H1 (cell line): ENCODE measurements at regions of chr22 and their contacts with region 1.

Region 1: GRCh38 chr22:40436505-40437451 is 66.4 kb downstream of the SGSM3 start:
- DNase-seq: no peak
- H3K4me3 ChIP-seq: no peak overlapping the region
- H3K27ac ChIP-seq: no peak overlapping the region
- H3K4me1 ChIP-seq: no peaks in the 10 kb centered on the region; a peak in 1 of 7 replicates
- H3K27me3 ChIP-seq: no peaks in the 10 kb centered on the region
- CTCF ChIP-seq: peak in 2 of 3 experiments; percentile 41 to 44; a peak in 2 of 4 replicates
- EP300 ChIP-seq: no peak
- POLR2A ChIP-seq: no peak
- RAD21 ChIP-seq: peak; percentile 67 to 69

Region 2: GRCh38 chr22:40310081-40310767 is 126.6 kb before region 1 on chr22:
- CTCF ChIA-PET with region 1: no interaction called
- POLR2A ChIA-PET with region 1: no interaction called
- DNase-seq: no peak
- H3K4me3 ChIP-seq: no peak overlapping the region
- H3K27ac ChIP-seq: no peak overlapping the region
- H3K4me1 ChIP-seq: no peaks in the 10 kb centered on the region
- H3K27me3 ChIP-seq: no peaks in the 10 kb centered on the region
- CTCF ChIP-seq: no peak
- EP300 ChIP-seq: no peak
- POLR2A ChIP-seq: no peak
- RAD21 ChIP-seq: no peak

Region 3: DNA sequence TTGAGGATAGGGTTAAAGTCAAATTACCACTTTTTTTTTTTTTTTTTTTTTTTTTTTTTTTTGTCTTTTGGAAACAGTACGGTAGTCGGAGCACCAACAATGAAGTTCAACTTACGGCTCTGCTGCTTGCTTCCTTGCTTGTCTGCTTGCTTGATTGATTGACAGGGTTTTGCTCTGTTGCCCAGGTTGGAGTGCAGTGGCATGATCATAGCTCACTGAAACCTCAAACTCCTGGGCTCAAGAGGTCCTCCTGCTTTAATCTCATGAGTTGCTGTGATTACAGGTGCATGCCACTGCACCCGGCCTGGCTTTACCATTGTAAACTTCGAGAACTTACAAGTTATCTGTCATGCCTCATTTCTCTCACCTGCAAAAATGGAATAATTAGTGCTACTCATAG is 60.6 kb before region 1 on chr22:
- CTCF ChIA-PET with region 1: no interaction called
- POLR2A ChIA-PET with region 1: no interaction called
- DNase-seq: no peak
- H3K4me3 ChIP-seq: no peak overlapping the region
- H3K27ac ChIP-seq: no peak overlapping the region
- H3K4me1 ChIP-seq: peaks cover 0 to 1% (median 0%) of the 10 kb centered on the region in 4 experiments; a peak in 1 of 7 replicates
- H3K27me3 ChIP-seq: no peaks in the 10 kb centered on the region
- CTCF ChIP-seq: no peak
- EP300 ChIP-seq: no peak
- POLR2A ChIP-seq: no peak
- RAD21 ChIP-seq: no peak

Region 4: GRCh38 chr22:40426594-40427333 is 10.0 kb before region 1 on chr22:
- CTCF ChIA-PET with region 1: interaction called, 57 read pairs
- POLR2A ChIA-PET with region 1: interaction called, 6 read pairs
- DNase-seq: no peak
- H3K4me3 ChIP-seq: no peak overlapping the region
- H3K27ac ChIP-seq: no peak overlapping the region
- H3K4me1 ChIP-seq: no peaks in the 10 kb centered on the region
- H3K27me3 ChIP-seq: no peaks in the 10 kb centered on the region
- CTCF ChIP-seq: no peak
- EP300 ChIP-seq: no peak
- POLR2A ChIP-seq: no peak
- RAD21 ChIP-seq: no peak

Region 5: DNA sequence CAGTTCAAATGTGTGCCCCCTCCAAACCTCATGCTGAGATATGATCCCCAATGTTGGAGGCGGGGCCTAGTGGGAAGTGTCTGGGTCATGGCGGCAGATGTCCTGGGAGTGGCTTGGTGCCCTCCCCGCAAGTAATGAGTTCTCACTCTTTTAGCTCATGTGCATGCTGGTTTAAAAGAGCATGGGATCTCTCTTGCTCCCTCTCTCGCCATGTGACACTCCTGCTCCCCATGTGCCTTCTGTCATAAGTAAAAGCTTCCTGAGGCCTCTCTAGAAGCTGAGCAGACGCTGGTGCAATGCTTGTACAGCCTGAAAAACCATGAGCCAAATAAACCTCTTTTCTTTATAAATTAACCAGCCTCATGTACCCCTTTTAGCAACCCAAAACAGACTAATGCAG is 32.4 kb after region 1 on chr22:
- CTCF ChIA-PET with region 1: interaction called, 15 read pairs
- POLR2A ChIA-PET with region 1: no interaction called
- DNase-seq: no peak
- H3K4me3 ChIP-seq: no peak overlapping the region
- H3K27ac ChIP-seq: no peak overlapping the region
- H3K4me1 ChIP-seq: peaks cover 0 to 7% (median 4%) of the 10 kb centered on the region in 4 experiments; a peak in 3 of 7 replicates
- H3K27me3 ChIP-seq: no peaks in the 10 kb centered on the region
- CTCF ChIP-seq: no peak
- EP300 ChIP-seq: no peak
- POLR2A ChIP-seq: no peak
- RAD21 ChIP-seq: no peak

Region 6: GRCh38 chr22:40487663-40488249 is 51.0 kb after region 1 on chr22:
- CTCF ChIA-PET with region 1: interaction called, 69 read pairs
- POLR2A ChIA-PET with region 1: no interaction called
- DNase-seq: no peak
- H3K4me3 ChIP-seq: no peak overlapping the region
- H3K27ac ChIP-seq: no peak overlapping the region
- H3K4me1 ChIP-seq: no peaks in the 10 kb centered on the region; a peak in 2 of 7 replicates
- H3K27me3 ChIP-seq: no peaks in the 10 kb centered on the region
- CTCF ChIP-seq: peak in 2 of 3 experiments; percentile 44 to 79; a peak in 2 of 4 replicates
- EP300 ChIP-seq: no peak
- POLR2A ChIP-seq: no peak
- RAD21 ChIP-seq: peak; percentile 45 to 54

Region 7: DNA sequence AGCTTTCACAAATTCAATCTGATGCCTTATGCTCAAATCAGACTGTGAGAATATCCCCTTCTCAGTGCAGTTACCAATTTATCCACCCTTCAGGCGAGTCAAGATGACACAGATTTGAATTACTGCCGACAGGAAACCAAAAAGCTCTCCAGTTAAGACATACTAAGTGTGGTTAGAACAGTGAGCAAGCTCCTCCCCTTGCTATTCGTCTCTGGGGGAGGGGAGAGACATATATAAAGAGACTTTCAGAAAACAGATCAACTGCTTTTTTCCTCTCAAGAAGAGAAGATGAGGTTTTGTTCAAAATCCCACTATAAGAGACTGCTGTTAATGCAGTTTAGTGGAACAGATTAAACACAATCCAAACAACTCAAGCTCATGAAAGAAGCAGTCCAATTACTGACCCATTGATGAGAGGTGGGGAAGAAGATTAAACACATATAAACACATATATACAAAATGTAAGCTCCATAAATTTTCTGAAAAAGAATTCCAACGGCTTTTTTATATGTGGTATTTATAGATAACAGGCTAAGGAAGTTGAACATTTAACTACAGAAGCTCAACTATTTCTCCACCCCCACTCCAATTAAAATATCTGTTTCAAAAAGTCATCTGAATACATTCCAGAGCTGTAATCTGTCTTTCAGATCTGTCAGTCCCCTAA is 97.1 kb after region 1 on chr22:
- CTCF ChIA-PET with region 1: interaction called, 10 read pairs
- POLR2A ChIA-PET with region 1: no interaction called
- DNase-seq: no peak
- H3K4me3 ChIP-seq: peak overlapping the region in 2 of 4 experiments; percentile 30 to 31; a peak in 2 of 8 replicates
- H3K27ac ChIP-seq: no peak overlapping the region
- H3K4me1 ChIP-seq: peaks cover 0 to 20% (median 6%) of the 10 kb centered on the region in 4 experiments; a peak in 3 of 7 replicates
- H3K27me3 ChIP-seq: no peaks in the 10 kb centered on the region
- CTCF ChIP-seq: no peak
- EP300 ChIP-seq: no peak
- POLR2A ChIP-seq: no peak
- RAD21 ChIP-seq: no peak

Region 8: DNA sequence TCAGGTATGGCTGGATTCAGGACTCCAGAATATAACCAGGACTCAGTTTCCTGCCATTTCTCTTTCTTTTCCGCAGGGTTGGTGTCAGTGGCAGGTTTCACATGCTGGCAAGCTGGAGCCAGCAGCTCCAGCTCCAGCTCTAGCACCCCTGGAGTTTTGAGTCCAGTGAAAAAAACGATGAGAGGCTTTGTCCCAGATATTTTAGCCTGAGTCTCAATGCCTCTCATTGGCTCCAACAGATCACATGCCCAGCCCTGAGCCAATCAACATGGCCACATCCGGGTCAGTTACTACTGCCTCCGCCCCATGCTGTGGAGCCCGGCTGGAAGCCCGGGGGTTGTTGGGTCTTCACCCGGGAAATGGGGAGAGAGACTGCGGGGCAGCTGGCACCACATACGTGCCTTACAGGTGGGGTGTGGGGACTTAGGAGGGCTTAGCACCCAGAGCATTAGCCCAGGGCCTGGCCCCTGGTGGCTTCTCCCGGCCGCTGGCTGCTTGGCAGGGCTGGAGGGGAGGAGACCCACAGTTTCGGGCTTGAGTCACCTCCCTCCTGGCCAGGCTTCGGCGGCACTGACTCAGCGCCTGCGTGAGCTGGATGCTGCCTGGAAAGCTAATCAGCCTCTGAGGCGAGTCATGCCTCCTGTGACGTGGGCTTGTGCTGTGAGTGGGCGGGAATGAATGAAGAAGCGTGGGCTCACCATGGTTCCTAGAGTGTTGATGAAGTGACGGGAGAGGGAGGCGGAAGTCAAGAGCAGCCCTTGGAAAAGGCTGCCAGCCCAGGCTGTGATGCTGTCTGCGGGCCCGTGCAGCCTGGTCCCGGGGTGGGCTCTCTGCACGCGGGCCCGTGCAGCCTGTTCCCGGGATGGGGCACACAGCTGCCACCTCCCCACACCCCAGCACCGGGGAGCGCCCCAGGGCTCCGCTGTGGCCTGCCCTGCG is 215.1 kb after region 1 on chr22:
- CTCF ChIA-PET with region 1: interaction called, 51 read pairs
- POLR2A ChIA-PET with region 1: no interaction called
- DNase-seq: peak; percentile 58 to 78
- H3K4me3 ChIP-seq: 0 out of 8 replicates have a peak overlapping the region, but pooled peaks of 1 of the 4 experiments have one; percentile 6
- H3K27ac ChIP-seq: no peak overlapping the region
- H3K4me1 ChIP-seq: peaks cover 0 to 5% (median 2%) of the 10 kb centered on the region in 4 experiments; a peak in 3 of 7 replicates
- H3K27me3 ChIP-seq: no peaks in the 10 kb centered on the region
- CTCF ChIP-seq: no peak
- EP300 ChIP-seq: no peak
- POLR2A ChIP-seq: no peak
- RAD21 ChIP-seq: no peak